ENCODE measurements at regions of chr1 and their contacts with region 1.

Region 1: DNA sequence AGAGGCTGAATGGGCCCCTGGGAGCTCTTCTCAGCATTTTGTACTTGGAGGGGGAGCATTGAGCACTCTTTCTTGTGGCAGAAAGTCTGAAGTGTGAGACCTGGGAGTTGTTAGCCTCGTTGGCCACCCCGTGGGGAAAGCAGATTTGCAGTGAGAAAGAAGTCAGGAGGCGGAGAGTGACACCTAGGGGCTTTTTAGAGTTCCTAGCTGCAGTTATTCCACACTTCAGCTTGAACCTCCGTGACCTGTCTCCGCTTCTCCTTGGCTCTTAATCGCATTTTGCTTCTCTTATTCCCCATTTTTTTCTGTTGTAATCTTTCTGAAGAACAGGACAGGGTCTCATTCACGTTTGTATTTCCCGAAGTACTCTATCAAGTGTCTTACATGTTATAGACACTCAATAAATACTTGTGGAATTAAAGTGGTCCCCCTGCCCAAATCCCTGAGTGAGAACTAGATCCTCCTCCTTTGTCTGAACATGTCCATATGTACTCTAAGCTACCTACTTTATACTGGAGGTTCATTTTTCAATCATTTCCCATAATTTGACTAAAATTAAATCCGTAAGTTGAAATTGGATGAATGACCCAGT is 14.5 kb upstream of the C1orf141 start:
- DNase-seq: peak; percentile 41 to 79 (median 58)
- ATAC-seq: peak; percentile 83 to 98 (median 88)
- H3K4me3 ChIP-seq: no peak overlapping the region
- H3K4me3 Mint-ChIP-seq: no peak overlapping the region
- H3K27ac ChIP-seq: no peak overlapping the region
- H3K27ac Mint-ChIP-seq: no peak overlapping the region
- H3K4me1 ChIP-seq: peaks cover 6 to 14% of the 10 kb centered on the region in 2 experiments
- H3K4me1 Mint-ChIP-seq: peaks cover 26 to 30% (median 27%) of the 10 kb centered on the region in 3 donors
- H3K27me3 ChIP-seq: no peaks in the 10 kb centered on the region
- H3K27me3 Mint-ChIP-seq: peaks cover 0 to 5% of the 10 kb centered on the region in 2 donors

Region 2: GRCh38 chr1:66764994-66765578 is 384.2 kb before region 1 on chr1:
- CTCF ChIA-PET with region 1: interaction called, 16 to 21 read pairs
- POLR2A ChIA-PET with region 1: no interaction called
- DNase-seq: peak in 30 of 35 experiments; percentile 10 to 76 (median 44)
- ATAC-seq: peak; percentile 58 to 74 (median 68)
- H3K4me3 ChIP-seq: no peak overlapping the region
- H3K4me3 Mint-ChIP-seq: no peak overlapping the region
- H3K27ac ChIP-seq: no peak overlapping the region
- H3K27ac Mint-ChIP-seq: no peak overlapping the region
- H3K4me1 ChIP-seq: peaks cover 0 to 6% of the 10 kb centered on the region in 2 experiments
- H3K4me1 Mint-ChIP-seq: peaks cover 14 to 19% (median 17%) of the 10 kb centered on the region in 3 donors
- H3K27me3 ChIP-seq: no peaks in the 10 kb centered on the region
- H3K27me3 Mint-ChIP-seq: peaks cover 0 to 3% of the 10 kb centered on the region in 2 donors

Region 3: GRCh38 chr1:66981679-66982078 is 167.6 kb before region 1 on chr1:
- CTCF ChIA-PET with region 1: interaction called, 4 to 11 read pairs
- POLR2A ChIA-PET with region 1: no interaction called
- DNase-seq: peak in 33 of 35 experiments; percentile 22 to 81 (median 42)
- ATAC-seq: peak; percentile 82 to 91 (median 86)
- H3K4me3 ChIP-seq: peak overlapping the region; percentile 43 to 44
- H3K4me3 Mint-ChIP-seq: peak overlapping the region; percentile 61 to 71 (median 71)
- H3K27ac ChIP-seq: peak overlapping the region; percentile 88
- H3K27ac Mint-ChIP-seq: peak overlapping the region; percentile 89 to 90
- H3K4me1 ChIP-seq: peaks cover 0 to 13% of the 10 kb centered on the region in 2 experiments
- H3K4me1 Mint-ChIP-seq: peaks cover 18 to 37% (median 33%) of the 10 kb centered on the region in 3 donors
- H3K27me3 ChIP-seq: no peaks in the 10 kb centered on the region
- H3K27me3 Mint-ChIP-seq: no peaks in the 10 kb centered on the region

Region 4: DNA sequence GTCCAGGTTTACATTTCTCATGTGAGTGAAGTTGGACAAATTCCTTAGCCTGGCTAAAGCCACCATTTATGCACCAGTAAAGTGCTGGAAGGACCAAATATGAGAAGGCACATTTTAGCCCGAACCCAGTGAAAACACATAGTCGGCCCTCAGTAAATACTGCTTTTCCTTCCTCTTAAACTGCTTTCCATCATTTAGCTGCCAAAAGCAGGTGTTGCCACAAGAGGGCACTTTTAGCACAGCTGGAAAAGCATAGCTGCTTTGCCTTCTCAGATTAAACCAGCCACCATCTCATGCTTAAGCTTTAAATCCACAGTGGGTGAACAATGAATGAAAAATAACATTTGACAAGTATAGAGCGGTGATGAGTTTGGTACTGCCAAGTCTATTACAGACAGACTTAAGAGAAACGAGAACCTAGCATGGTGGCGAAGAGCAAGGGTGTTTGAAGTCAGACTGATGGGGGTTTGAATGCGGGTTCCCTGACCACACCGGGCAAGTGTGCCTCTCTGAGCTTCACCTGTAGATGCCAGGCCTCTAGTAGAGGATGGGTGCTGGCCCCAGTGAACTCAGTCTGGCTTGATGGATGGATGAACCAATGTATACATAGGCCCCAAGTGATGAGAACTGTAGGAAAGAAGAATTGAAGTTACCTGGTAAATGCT is 153.1 kb before region 1 on chr1:
- CTCF ChIA-PET with region 1: interaction called, 21 to 24 read pairs
- POLR2A ChIA-PET with region 1: no interaction called
- DNase-seq: peak; percentile 30 to 73 (median 53)
- ATAC-seq: peak; percentile 69 to 82 (median 81)
- H3K4me3 ChIP-seq: no peak overlapping the region
- H3K4me3 Mint-ChIP-seq: no peak overlapping the region
- H3K27ac ChIP-seq: no peak overlapping the region
- H3K27ac Mint-ChIP-seq: no peak overlapping the region
- H3K4me1 ChIP-seq: peaks cover 0 to 4% of the 10 kb centered on the region in 2 experiments
- H3K4me1 Mint-ChIP-seq: peaks cover 21 to 25% (median 23%) of the 10 kb centered on the region in 3 donors
- H3K27me3 ChIP-seq: no peaks in the 10 kb centered on the region
- H3K27me3 Mint-ChIP-seq: no peaks in the 10 kb centered on the region

Region 5: DNA sequence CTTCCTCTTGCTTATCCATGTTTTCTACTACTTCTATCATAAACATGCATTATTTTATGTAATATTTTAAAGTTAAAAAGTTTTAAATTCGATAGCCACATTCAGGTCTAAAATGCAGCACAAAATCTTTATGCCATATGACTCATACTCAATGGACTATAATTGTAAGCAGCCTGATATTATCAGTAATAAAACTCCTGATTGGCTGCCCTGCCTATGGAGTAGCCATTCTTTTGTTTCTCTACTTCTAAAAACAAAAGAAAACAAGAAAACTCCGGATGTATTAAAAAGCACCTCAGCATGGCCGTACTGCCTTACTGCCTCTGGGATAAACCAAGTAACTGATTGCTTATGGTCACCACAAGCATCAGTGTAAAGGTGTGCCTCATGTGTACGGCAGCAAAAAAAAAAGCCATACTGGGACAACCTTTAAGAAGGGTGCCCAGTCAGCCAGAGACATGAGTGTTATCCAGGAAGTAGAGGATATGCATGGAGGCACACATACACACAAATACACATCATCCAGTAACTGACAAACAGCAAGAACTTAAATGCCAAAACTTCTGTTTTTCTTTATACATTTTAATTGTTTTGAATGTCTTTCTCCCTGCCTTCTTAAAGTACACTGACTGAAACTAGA is 104.5 kb before region 1 on chr1:
- CTCF ChIA-PET with region 1: no interaction called
- POLR2A ChIA-PET with region 1: no interaction called
- DNase-seq: no peak
- ATAC-seq: no peak
- H3K4me3 ChIP-seq: no peak overlapping the region
- H3K4me3 Mint-ChIP-seq: no peak overlapping the region
- H3K27ac ChIP-seq: no peak overlapping the region
- H3K27ac Mint-ChIP-seq: no peak overlapping the region
- H3K4me1 ChIP-seq: no peaks in the 10 kb centered on the region
- H3K4me1 Mint-ChIP-seq: peaks cover 3 to 21% (median 19%) of the 10 kb centered on the region in 3 donors
- H3K27me3 ChIP-seq: no peaks in the 10 kb centered on the region
- H3K27me3 Mint-ChIP-seq: no peaks in the 10 kb centered on the region

Region 6: GRCh38 chr1:67162957-67163356 is 13.7 kb after region 1 on chr1:
- CTCF ChIA-PET with region 1: interaction called, 5 to 13 read pairs
- POLR2A ChIA-PET with region 1: interaction called in 1 of 2 experiments, 5 read pairs
- DNase-seq: peak in 1 of 35 experiments; percentile 17
- ATAC-seq: peak; percentile 18 to 59 (median 36)
- H3K4me3 ChIP-seq: no peak overlapping the region
- H3K4me3 Mint-ChIP-seq: no peak overlapping the region
- H3K27ac ChIP-seq: no peak overlapping the region
- H3K27ac Mint-ChIP-seq: no peak overlapping the region
- H3K4me1 ChIP-seq: no peaks in the 10 kb centered on the region
- H3K4me1 Mint-ChIP-seq: peaks cover 12 to 31% (median 24%) of the 10 kb centered on the region in 3 donors
- H3K27me3 ChIP-seq: peaks cover 0 to 3% of the 10 kb centered on the region in 2 experiments
- H3K27me3 Mint-ChIP-seq: peaks cover 4 to 14% of the 10 kb centered on the region in 2 donors

Region 7: GRCh38 chr1:67171978-67172377 is 22.7 kb after region 1 on chr1:
- CTCF ChIA-PET with region 1: interaction called, 7 to 10 read pairs
- POLR2A ChIA-PET with region 1: interaction called in 1 of 2 experiments, 4 read pairs
- DNase-seq: peak in 1 of 35 experiments; percentile 72
- ATAC-seq: peak; percentile 48 to 58 (median 54)
- H3K4me3 ChIP-seq: no peak overlapping the region
- H3K4me3 Mint-ChIP-seq: peak overlapping the region; percentile 14 to 69 (median 54)
- H3K27ac ChIP-seq: peak overlapping the region; percentile 70
- H3K27ac Mint-ChIP-seq: peak overlapping the region; percentile 43 to 60
- H3K4me1 ChIP-seq: peaks cover 14 to 38% of the 10 kb centered on the region in 2 experiments
- H3K4me1 Mint-ChIP-seq: peaks cover 29 to 69% (median 55%) of the 10 kb centered on the region in 3 donors
- H3K27me3 ChIP-seq: peaks cover 0 to 2% of the 10 kb centered on the region in 2 experiments
- H3K27me3 Mint-ChIP-seq: peaks cover 0 to 3% of the 10 kb centered on the region in 2 donors

Region 8: DNA sequence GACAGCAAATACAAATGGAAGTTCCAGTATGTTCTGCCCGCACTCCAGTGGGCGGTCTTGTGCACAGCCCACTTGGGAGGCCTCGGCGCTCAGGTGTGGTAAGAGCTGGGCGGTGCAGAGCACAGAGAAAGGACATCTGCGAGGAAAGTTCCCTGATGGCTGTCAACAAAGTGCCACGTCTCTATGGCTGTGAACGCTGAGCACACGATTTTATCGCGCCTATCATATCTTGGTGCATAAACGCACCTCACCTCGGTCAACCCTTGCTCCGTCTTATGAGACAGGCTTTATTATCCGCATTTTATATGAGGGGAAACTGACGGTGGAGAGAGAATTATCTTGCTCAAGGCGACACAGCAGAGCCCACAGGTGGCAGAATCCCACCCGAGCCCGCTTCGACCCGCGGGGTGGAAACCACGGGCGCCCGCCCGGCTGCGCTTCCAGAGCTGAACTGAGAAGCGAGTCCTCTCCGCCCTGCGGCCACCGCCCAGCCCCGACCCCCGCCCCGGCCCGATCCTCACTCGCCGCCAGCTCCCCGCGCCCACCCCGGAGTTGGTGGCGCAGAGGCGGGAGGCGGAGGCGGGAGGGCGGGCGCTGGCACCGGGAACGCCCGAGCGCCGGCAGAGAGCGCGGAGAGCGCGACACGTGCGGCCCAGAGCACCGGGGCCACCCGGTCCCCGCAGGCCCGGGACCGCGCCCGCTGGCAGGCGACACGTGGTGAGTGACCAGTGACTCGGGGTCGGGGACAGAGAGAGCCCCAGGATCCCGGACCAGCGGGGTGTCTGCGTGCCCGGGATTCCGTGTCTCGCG is 158.2 kb after region 1 on chr1 and contains the start of gene IL12RB2:
- CTCF ChIA-PET with region 1: interaction called in 1 of 2 experiments, 10 read pairs
- POLR2A ChIA-PET with region 1: no interaction called
- DNase-seq: peak in 33 of 35 experiments; percentile 5 to 55 (median 16)
- ATAC-seq: peak; percentile 74 to 82 (median 76)
- H3K4me3 ChIP-seq: peak within 1 kb of the TSS; percentile 53 to 63
- H3K4me3 Mint-ChIP-seq: peak within 1 kb of the TSS; percentile 73 to 84 (median 80)
- H3K27ac ChIP-seq: peak within 1 kb of the TSS; percentile 24
- H3K27ac Mint-ChIP-seq: peak within 1 kb of the TSS; percentile 31 to 79
- H3K4me1 ChIP-seq: peaks cover 0 to 13% of the 10 kb centered on the region in 2 experiments
- H3K4me1 Mint-ChIP-seq: peaks cover 14 to 19% (median 14%) of the 10 kb centered on the region in 3 donors
- H3K27me3 ChIP-seq: peaks cover 0 to 20% of the 10 kb centered on the region in 2 experiments
- H3K27me3 Mint-ChIP-seq: peaks cover 10 to 20% of the 10 kb centered on the region in 2 donors
- total RNA-seq, gene IL12RB2: 1.3 to 3.5 (median 2.9) TPM

Measured in T-cell (primary cell).